HEK293 (cell line): ENCODE measurements at regions of chr12 and their contacts with region 1.

Region 1: DNA sequence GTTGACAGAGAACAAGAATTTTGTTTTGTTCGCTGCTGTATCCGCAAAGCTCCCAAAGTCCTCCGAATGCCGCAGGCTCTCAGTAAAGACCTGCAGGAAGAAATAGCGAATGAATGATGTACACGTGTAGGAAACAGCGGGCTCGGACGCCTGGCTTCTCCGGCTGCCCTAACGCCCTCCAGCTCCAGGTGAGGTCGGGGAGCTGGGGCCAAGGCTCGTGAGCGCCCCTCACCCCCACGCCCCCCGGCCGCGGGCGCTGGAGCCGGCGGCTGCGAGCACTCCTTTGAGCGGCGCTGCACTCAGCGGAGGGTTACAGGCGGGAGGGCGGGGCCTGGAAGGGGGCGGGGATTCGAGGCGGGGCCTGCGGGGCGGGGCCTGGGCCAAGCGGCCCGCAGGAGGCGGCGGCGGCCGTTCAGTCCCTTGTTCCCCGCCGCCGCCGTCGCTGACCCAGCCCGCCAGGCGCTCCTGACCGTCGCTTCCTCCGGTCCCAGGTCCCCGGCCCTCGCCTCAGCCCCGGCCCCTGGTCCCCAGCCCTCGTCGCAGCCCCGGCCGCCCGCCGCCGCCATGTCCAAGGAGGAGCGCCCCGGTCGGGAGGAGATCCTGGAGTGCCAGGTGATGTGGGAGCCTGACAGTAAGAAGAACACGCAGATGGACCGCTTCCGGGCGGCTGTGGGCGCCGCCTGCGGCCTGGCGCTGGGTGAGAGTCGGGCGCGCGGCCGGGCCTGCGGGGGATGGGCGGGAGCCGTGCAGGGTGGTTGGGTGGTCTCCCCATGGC is at the start of gene AACS:
- H3K4me3 ChIP-seq: peak within 1 kb of the TSS; percentile 68
- H3K27ac ChIP-seq: peak within 1 kb of the TSS; percentile 62; the same call in 1 of the 2 replicates
- H3K4me1 ChIP-seq: 0 out of 2 replicates have a peak, but pooled peaks cover 6% of the 10 kb centered on the region
- CTCF ChIP-seq: peak; percentile 63

Region 2: GRCh38 chr12:125049093-125049458 is 16.1 kb before region 1 on chr12:
- CTCF ChIA-PET with region 1: interaction called, 6 read pairs
- POLR2A ChIA-PET with region 1: interaction called, 23 read pairs
- H3K4me3 ChIP-seq: peak overlapping the region; percentile 43
- H3K27ac ChIP-seq: peak overlapping the region; percentile 1; the same call in 1 of the 2 replicates
- H3K4me1 ChIP-seq: no peaks in the 10 kb centered on the region
- CTCF ChIP-seq: no peak